ENCODE measurements at regions of chr19 and their contacts with region 1.

Region 1: GRCh38 chr19:45615795-45616708 is 14.0 kb upstream of the GPR4 start:
- DNase-seq: peak; percentile 93
- ATAC-seq: peak; percentile 92
- H3K4me3 Mint-ChIP-seq: no peak overlapping the region
- H3K27ac Mint-ChIP-seq: peak overlapping the region; percentile 43
- H3K4me1 Mint-ChIP-seq: peaks cover 23% of the 10 kb centered on the region
- H3K27me3 Mint-ChIP-seq: no peaks in the 10 kb centered on the region
- CTCF ChIP-seq: no peak

Region 2: GRCh38 chr19:45496349-45496953 is 119.6 kb before region 1 on chr19:
- CTCF ChIA-PET with region 1: no interaction called
- POLR2A ChIA-PET with region 1: no interaction called
- intact Hi-C with region 1: no loop called
- DNase-seq: peak; percentile 59
- ATAC-seq: peak; percentile 6
- H3K4me3 Mint-ChIP-seq: peak overlapping the region; percentile 28
- H3K27ac Mint-ChIP-seq: no peak overlapping the region
- H3K4me1 Mint-ChIP-seq: peaks cover 35% of the 10 kb centered on the region
- H3K27me3 Mint-ChIP-seq: peaks cover 19% of the 10 kb centered on the region
- CTCF ChIP-seq: no peak

Region 3: GRCh38 chr19:45542234-45542668 is 73.8 kb before region 1 on chr19:
- CTCF ChIA-PET with region 1: no interaction called
- POLR2A ChIA-PET with region 1: no interaction called
- intact Hi-C with region 1: no loop called
- DNase-seq: no peak
- ATAC-seq: no peak
- H3K4me3 Mint-ChIP-seq: no peak overlapping the region
- H3K27ac Mint-ChIP-seq: no peak overlapping the region
- H3K4me1 Mint-ChIP-seq: peaks cover 5% of the 10 kb centered on the region
- H3K27me3 Mint-ChIP-seq: no peaks in the 10 kb centered on the region
- CTCF ChIP-seq: no peak

Region 4: DNA sequence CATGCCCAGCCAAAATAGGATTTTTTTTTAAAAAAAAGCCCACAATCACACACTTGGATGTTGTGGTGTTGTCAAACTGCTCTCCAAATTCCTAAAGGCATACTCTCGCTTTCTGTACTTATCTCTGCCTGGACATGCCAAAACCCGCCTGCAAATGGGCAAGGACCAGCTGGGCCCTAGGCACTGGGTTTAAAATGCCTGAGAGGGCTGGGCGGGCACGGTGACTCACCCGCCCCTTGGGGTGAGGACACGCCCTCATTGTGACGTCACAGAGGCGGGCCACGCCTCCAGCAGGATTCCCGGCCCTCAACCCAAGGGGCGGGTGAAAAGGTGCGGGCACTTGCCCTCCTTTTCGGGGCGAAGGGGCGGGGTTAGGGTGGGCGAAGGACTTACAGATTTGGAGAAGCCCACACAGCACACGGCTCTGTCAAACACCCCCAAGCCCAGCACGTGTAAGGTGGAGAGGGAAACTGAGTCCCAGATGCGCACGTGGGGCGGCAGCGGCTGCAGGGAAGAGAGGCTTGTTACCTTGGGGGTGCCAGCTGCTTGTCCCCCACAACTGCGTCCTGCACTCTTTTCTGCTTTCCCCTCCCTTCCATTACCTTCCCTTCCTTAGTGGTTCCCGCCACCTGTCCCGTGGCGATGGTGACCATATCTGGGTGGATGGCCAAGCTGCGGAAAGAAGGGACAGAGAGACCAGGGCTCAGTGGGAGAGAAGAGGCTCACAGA is 16.6 kb after region 1 on chr19:
- CTCF ChIA-PET with region 1: no interaction called
- POLR2A ChIA-PET with region 1: interaction called, 10 read pairs
- intact Hi-C with region 1: no loop called
- DNase-seq: peak; percentile 60
- ATAC-seq: peak; percentile 52
- H3K4me3 Mint-ChIP-seq: no peak overlapping the region
- H3K27ac Mint-ChIP-seq: peak overlapping the region; percentile 61
- H3K4me1 Mint-ChIP-seq: peaks cover 17% of the 10 kb centered on the region
- H3K27me3 Mint-ChIP-seq: no peaks in the 10 kb centered on the region
- CTCF ChIP-seq: no peak